A549 (cell line): ENCODE measurements at regions of chr15 and their contacts with region 1.

Region 1: DNA sequence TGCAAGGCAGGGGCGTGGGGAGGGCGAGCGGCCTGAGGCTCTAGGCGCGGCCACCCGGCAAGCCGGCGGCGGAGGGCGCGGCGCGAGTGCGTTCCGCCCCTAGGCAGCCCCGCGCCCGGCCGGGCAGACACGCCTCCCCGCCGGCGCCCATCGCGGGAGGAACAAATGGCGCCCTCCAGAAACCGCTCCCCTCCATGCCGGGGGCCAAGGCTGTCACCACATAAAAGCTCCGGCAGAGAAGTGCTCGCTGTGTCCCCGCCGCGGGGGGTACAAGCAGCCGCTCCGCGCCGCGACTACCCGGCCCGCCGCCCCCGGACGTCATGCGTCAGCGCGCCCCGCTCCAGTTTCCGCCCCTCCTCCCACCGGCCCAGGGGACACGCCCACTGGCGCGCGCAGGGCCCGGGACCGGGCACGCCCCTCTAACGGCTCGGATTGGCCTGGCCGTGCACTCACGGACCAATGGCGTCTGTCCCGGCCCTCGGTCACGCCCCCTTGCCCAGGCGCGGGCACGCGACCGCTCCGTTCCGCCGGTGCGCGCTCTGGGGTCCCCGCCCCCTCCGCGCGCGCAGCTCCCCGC is 391 bp upstream of the KLF13 start:
- DNase-seq: peak; percentile 98 to 99
- ATAC-seq: peak; percentile 63 to 87
- H3K4me3 ChIP-seq: peak overlapping the region; percentile 71
- H3K27ac ChIP-seq: peak overlapping the region; percentile 94
- H3K4me1 ChIP-seq: peaks cover 24% of the 10 kb centered on the region
- CTCF ChIP-seq: no peak
- EP300 ChIP-seq: no peak
- POLR2A ChIP-seq: no peak; the same call in none of the 2 replicates
- RAD21 ChIP-seq: no peak

Region 2: DNA sequence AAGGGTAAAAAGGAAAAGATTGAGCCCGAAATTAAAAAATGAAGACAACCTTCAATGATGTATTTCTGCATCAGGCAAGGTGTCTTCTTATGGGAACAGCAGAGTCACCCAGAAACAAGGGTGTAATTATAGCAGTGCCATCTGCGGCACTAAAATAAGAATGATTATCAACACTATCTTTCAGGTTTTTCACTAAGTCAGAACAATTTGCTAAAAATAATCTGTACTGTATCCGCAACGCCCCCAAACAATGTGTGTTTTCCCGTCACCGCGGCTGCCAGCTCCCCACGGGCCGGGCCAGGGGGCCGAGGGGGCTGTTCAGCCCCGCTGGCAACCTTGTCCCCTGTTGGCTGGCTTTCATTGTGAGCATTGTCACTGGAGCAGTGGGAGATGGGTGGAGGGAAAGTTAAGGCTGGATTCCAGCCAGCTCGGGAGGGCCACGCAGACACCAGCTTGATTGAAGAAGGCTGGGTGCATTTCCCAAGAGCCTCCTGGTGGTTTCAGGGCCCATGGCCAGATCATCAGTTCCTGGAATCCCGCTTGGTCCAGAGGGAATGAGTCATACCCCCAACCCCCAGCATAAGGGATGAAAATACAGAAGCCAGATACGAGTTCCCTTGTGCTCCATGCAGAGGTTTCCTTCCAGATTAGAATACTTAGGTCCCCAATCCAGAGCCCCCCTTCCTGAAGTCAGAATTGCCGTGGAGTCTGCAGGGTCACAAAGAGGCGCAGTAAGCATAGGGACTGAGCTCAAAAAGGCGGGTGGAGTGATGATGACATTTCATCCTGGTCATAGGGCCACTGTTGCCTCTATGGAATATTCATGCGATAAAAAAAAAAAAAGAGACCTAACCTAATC is 89.8 kb before region 1 on chr15:
- CTCF ChIA-PET with region 1: no interaction called
- POLR2A ChIA-PET with region 1: interaction called, 16 read pairs
- DNase-seq: peak; percentile 85 to 93
- ATAC-seq: peak; percentile 94 to 95
- H3K4me3 ChIP-seq: no peak overlapping the region
- H3K27ac ChIP-seq: peak overlapping the region; percentile 71 to 89
- H3K4me1 ChIP-seq: peaks cover 23% of the 10 kb centered on the region
- CTCF ChIP-seq: no peak
- EP300 ChIP-seq: peak in 1 of 2 experiments; percentile 33; a peak in 2 of 5 replicates
- POLR2A ChIP-seq: no peak
- RAD21 ChIP-seq: peak in 1 of 2 experiments; percentile 41; a peak in 2 of 5 replicates

Region 3: DNA sequence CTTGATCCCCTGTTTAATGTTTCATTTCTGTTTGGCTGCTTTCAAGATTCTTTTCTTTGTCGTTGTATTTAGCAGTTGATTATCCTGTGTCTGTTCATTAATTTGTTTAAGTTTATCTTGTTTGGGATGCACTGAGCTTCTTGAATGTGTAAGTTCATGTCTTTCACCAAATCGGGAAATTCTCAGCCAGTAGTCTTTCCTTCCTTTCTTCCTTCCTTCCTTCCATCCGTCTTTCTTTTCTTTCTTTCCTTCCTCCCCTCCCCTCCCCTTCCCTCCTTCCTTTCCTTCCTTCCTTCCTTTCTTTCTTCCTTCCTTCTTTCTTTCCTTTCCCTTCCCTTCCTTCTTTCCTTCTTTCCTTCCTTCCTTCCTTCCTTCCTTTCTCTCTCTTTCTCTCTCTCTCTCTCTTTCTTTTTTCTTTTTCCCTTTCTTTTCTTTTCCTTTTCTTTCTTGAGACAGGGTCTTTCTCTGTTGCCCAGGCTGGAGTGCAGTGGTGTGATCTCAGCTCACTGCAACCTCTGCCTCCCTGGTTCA is 35.1 kb before region 1 on chr15:
- CTCF ChIA-PET with region 1: no interaction called
- POLR2A ChIA-PET with region 1: no interaction called
- DNase-seq: no peak
- ATAC-seq: no peak
- H3K4me3 ChIP-seq: no peak overlapping the region
- H3K27ac ChIP-seq: no peak overlapping the region
- H3K4me1 ChIP-seq: peaks cover 28% of the 10 kb centered on the region
- CTCF ChIP-seq: no peak
- EP300 ChIP-seq: no peak
- POLR2A ChIP-seq: no peak
- RAD21 ChIP-seq: no peak

Region 4: GRCh38 chr15:31311735-31312619 is 14.3 kb before region 1 on chr15:
- CTCF ChIA-PET with region 1: interaction called, 12 read pairs
- POLR2A ChIA-PET with region 1: interaction called, 3 read pairs
- DNase-seq: no peak
- ATAC-seq: peak; percentile 20 to 32; a peak in 4 of 6 replicates
- H3K4me3 ChIP-seq: no peak overlapping the region
- H3K27ac ChIP-seq: no peak overlapping the region
- H3K4me1 ChIP-seq: no peaks in the 10 kb centered on the region
- CTCF ChIP-seq: no peak
- EP300 ChIP-seq: no peak
- POLR2A ChIP-seq: no peak
- RAD21 ChIP-seq: no peak

Region 5: DNA sequence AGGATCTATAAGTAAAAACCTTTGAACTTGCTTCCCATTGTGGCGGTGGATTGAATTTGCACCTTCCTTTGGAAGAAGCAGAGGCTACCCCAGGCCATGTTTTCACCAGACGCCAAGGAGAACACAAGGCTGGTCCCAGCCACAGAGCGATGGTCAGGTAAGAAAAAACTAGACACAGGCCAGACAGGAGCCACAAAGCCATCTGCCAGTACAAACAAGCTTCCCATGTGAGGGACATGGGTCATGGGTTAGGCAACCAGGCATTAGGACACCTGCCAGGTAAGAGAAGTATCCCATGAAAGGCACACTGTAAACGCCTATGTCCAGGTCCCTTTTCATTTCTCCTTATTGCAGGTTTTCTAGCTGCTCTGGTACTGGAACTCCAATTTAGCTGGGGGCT is 190.6 kb after region 1 on chr15:
- CTCF ChIA-PET with region 1: no interaction called
- POLR2A ChIA-PET with region 1: no interaction called
- DNase-seq: no peak
- ATAC-seq: no peak
- H3K4me3 ChIP-seq: no peak overlapping the region
- H3K27ac ChIP-seq: no peak overlapping the region
- H3K4me1 ChIP-seq: no peaks in the 10 kb centered on the region
- CTCF ChIP-seq: no peak
- EP300 ChIP-seq: no peak
- POLR2A ChIP-seq: no peak
- RAD21 ChIP-seq: no peak